Heart right ventricle (tissue), 16 donors: ENCODE measurements at regions of chr2 and their contacts with region 1.

Region 1: DNA sequence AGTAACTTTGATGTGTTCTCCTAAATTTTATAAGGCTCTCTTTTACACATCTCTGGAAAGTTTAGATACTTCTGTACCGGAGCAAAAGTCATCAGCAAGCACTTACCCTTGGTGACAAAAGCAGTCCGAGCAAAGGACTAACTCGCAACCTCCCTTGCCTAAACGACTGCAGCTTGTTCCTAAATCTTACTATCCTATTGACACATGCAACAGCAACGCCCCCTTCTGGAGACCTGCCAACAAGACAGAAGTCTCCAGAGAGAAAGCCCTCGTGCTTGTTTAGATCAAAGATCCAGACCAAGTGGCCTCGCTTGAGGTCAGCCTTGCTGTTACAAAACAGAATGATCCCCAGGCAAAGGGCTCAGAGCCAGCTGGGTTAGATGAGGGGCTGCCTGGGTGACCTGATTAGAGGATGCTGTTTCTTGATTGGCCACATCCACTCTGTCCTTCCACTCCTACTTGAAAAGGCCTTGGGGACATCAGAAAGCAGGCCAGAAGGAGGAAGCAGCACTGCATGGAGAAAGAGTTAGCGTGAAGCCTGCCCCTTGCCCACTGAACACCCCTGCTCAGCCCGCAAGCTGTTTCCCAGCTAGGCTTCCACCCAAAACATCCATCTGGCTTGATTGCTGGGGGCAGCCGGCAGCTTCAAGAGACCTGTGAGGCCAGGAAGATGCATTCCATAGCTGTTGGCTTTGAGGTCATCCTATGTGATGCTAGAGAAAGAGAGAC is 94.3 kb downstream of the HNRNPLL start:
- DNase-seq: peak; percentile 73 to 91
- ATAC-seq: peak; percentile 77 to 86 (median 82)
- H3K4me3 ChIP-seq: no peak overlapping the region
- H3K27ac ChIP-seq: peak overlapping the region in 3 of 10 donors; percentile 9 to 39 (median 37)
- H3K4me1 ChIP-seq: peaks cover 0 to 29% (median 14%) of the 10 kb centered on the region in 9 donors
- H3K27me3 ChIP-seq: no peaks in the 10 kb centered on the region
- CTCF ChIP-seq: peak in 8 of 9 donors; percentile 9 to 67 (median 47)

Region 2: GRCh38 chr2:38308821-38309220 is 199.7 kb before region 1 on chr2:
- intact Hi-C with region 1: loop called in 5 of 10 experiments (anchors 2 to 10 kb)
- DNase-seq: no peak
- ATAC-seq: no peak
- H3K4me3 ChIP-seq: no peak overlapping the region
- H3K27ac ChIP-seq: no peak overlapping the region
- H3K4me1 ChIP-seq: no peaks in the 10 kb centered on the region
- H3K27me3 ChIP-seq: no peaks in the 10 kb centered on the region
- CTCF ChIP-seq: no peak